Breast epithelium (tissue), 4 donors: ENCODE measurements at regions of chr10 and their contacts with region 1.

Region 1: DNA sequence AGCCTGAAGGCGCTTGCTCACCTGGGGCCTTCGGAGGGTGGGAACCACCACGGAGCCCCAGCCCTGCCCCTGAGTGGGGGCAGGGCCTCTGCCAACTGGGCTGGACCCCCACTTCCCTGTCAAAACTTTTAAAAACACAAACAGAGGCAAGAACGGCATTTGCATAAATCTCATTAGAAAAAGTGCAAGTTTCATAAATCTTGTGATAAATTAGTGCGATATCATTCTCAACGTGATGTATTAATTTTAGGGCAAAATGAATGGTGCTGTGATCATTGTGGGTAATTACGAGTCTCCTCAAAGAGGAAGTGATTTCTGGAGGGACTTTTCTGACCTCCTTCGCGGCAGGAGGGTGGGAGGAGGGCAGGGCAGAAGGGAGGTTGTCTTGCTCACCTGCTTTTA is 98.3 kb downstream of the CDH23 start:
- DNase-seq: no peak
- H3K4me3 ChIP-seq: no peak overlapping the region
- H3K27ac ChIP-seq: no peak overlapping the region
- H3K4me1 ChIP-seq: no peaks in the 10 kb centered on the region
- H3K27me3 ChIP-seq: no peaks in the 10 kb centered on the region
- CTCF ChIP-seq: no peak
- POLR2A ChIP-seq: no peak

Region 2: GRCh38 chr10:71512775-71513539 is 18.0 kb after region 1 on chr10:
- intact Hi-C with region 1: no loop called
- DNase-seq: peak; percentile 64 to 84
- H3K4me3 ChIP-seq: no peak overlapping the region
- H3K27ac ChIP-seq: no peak overlapping the region
- H3K4me1 ChIP-seq: no peaks in the 10 kb centered on the region
- H3K27me3 ChIP-seq: no peaks in the 10 kb centered on the region
- CTCF ChIP-seq: no peak
- POLR2A ChIP-seq: no peak

Region 3: DNA sequence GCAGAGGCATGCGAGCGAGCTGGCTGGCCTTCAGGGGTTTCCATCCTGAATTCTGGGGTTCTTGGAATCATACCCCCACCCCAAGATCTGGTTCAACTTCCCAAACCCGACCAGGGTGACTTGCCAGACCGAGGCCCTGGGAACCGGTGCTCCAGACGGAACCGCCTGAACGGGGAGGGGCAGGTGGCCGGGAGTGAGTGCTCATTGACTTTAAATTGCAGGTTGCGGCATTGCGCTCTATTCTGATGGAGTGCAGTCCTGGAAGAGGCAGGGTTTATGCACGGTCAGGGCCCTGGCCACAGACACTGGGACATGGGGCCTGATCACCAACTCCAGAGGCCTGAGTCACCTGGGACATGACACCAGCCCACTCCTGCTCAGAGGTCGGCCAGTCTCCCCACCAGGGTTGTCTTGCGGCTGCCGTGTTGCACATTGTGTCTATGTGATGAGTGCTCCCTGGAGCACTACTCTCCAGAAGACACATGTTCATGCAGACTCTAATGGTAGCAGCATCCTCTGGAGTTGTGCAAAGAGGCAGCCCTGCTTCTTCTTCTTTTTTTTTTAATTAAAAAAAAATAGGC is 772.9 kb after region 1 on chr10:
- intact Hi-C with region 1: loop called (anchors 5 kb)
- DNase-seq: no peak
- H3K4me3 ChIP-seq: no peak overlapping the region
- H3K27ac ChIP-seq: no peak overlapping the region
- H3K4me1 ChIP-seq: no peaks in the 10 kb centered on the region
- H3K27me3 ChIP-seq: no peaks in the 10 kb centered on the region
- CTCF ChIP-seq: no peak
- POLR2A ChIP-seq: no peak